ENCODE measurements at regions of chr11 and their contacts with region 1.

Region 1: GRCh38 chr11:95067039-95067840 is 521 bp downstream of the SRSF8 start:
- DNase-seq: peak; percentile 80
- ATAC-seq: peak; percentile 74
- H3K4me3 Mint-ChIP-seq: peak overlapping the region; percentile 94
- H3K27ac Mint-ChIP-seq: peak overlapping the region; percentile 97
- H3K4me1 Mint-ChIP-seq: peaks cover 25% of the 10 kb centered on the region
- H3K27me3 Mint-ChIP-seq: peaks cover 8% of the 10 kb centered on the region

Region 2: DNA sequence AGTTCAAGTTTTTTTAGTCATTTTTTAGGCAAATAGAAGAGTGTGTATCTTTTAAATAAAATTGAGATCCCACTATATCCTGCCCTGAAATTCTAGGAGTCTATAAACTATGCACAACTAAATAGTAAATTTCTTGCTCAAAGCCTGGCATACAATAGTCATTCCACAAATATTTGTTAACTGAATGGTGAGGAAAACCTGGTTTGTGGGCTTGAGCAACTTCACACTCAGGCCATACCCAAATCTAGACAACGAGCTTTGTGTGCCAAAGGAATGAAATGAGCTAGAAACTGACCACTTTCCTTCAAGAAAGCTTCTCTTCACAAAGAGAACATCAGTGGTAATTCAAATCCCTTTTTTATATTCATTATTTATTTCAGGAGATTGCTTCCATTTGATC is 338.7 kb before region 1 on chr11:
- CTCF ChIA-PET with region 1: no interaction called
- POLR2A ChIA-PET with region 1: no interaction called
- DNase-seq: no peak
- ATAC-seq: no peak
- H3K4me3 Mint-ChIP-seq: no peak overlapping the region
- H3K27ac Mint-ChIP-seq: no peak overlapping the region
- H3K4me1 Mint-ChIP-seq: no peaks in the 10 kb centered on the region
- H3K27me3 Mint-ChIP-seq: peaks cover 15% of the 10 kb centered on the region

Region 3: DNA sequence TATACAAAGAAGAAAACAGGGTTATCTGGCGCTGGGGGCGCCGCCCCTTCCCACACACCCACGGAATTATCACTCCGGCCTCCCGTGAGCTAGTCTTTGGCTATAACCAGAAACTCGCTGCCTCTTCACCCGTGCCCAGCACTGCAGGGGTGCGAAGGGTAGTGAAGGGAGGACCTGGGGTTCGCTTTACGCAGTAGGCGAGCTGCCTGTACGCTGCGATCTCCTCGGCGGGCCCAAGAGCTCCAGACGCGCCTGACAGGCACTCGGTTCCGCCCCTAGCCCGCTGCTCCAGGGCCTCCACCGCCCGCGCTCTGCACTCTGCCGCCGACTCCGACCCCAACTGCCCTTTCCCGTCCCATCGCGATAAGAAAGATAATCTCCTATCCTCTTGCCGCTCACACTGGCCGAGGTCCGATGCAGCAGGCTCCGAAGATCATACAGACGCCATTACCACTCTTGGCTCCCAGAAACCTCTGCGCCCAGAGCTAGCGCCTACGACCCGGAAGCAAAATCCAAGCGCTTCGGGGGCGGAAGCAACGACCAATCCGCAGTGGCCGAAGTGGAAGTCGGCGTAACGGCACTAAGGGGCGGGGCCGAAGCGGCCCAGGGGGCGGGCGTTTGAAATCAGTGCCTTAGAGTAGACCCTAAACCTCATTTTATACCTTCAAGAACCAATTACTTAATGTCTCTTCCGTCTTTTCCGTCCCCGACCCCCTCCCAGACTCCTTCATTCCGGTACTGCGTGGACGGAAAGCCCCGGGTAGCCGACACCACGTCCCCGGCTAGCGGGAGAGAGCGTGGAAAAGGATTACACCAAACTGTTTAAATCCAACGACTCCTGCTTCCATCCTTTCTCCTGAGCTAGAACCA is 93.9 kb before region 1 on chr11 and contains the starts of genes CWC15 and KDM4D:
- CTCF ChIA-PET with region 1: interaction called, 7 read pairs
- POLR2A ChIA-PET with region 1: interaction called, 34 read pairs
- DNase-seq: peak; percentile 97
- ATAC-seq: peak; percentile 100
- H3K4me3 Mint-ChIP-seq: peak within 1 kb of the TSS; percentile 89
- H3K27ac Mint-ChIP-seq: peak within 1 kb of the TSS; percentile 92
- H3K4me1 Mint-ChIP-seq: peaks cover 28% of the 10 kb centered on the region
- H3K27me3 Mint-ChIP-seq: no peaks in the 10 kb centered on the region
- total RNA-seq, gene CWC15: 79.0 to 79.5 TPM
- total RNA-seq, gene KDM4D: 0.89 to 0.90 TPM

Region 4: DNA sequence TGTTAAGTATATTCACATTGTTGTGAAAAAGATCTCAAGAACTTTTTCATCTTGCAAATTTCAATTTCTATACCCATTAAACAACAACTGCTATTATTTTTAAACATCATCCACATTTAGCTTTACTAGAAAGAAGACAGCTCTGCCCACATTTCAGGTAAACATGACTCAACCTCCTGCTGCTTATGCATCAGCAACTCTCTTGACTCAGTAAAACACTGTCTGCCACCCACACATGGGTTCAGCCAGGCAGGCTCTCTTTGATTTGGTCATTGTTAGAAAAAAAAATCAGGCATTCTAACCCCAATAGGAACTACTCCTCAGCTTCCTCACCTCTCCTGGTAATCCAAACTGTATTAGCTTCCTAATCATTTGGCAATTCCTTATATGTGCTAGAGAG is 17.3 kb after region 1 on chr11:
- CTCF ChIA-PET with region 1: interaction called, 233 read pairs
- POLR2A ChIA-PET with region 1: interaction called, 103 read pairs
- DNase-seq: peak; percentile 27
- ATAC-seq: no peak
- H3K4me3 Mint-ChIP-seq: no peak overlapping the region
- H3K27ac Mint-ChIP-seq: no peak overlapping the region
- H3K4me1 Mint-ChIP-seq: peaks cover 40% of the 10 kb centered on the region
- H3K27me3 Mint-ChIP-seq: no peaks in the 10 kb centered on the region

Region 5: GRCh38 chr11:95095858-95096587 is 28.8 kb after region 1 on chr11:
- CTCF ChIA-PET with region 1: interaction called, 233 read pairs
- POLR2A ChIA-PET with region 1: interaction called, 103 read pairs
- DNase-seq: peak; percentile 4
- ATAC-seq: peak; percentile 65
- H3K4me3 Mint-ChIP-seq: peak overlapping the region; percentile 21
- H3K27ac Mint-ChIP-seq: peak overlapping the region; percentile 84
- H3K4me1 Mint-ChIP-seq: peaks cover 83% of the 10 kb centered on the region
- H3K27me3 Mint-ChIP-seq: no peaks in the 10 kb centered on the region

Region 6: DNA sequence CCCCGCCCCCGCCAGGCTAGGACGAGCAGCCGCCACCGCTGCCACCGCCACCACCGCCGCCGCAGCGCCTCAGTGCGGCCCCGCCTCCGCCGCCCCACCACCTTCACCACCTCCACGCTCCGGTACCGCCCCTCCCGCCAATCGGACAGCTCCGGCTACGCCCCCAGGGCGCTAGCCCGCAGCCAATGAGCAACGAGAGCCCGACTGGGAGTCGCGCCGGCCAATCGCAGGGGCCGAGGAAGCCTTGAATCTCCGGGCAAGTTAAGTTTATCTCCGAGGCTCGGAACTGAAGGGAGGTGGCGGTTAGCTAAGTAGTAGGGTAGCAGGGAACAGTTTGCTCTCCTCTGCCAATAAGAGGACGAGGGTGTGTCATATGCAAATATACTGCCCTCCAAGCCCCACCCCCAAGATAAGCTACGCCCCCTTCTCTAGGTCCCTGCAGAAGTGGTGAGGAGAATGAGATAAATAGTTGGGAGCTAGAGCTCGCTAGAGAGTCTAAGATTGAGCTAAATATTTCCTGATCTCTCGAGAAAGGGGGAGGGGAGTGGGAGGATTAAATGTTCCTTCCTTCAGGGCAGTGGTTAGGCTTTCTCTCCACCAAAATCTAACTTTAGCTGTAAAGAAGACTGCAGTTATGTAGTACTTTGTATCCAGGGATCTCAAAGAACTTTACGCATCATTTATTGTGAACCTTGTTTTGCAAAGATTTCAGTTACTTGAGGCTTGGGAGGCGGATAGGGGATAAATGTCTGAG is 164.1 kb after region 1 on chr11 and contains the start of gene SESN3:
- CTCF ChIA-PET with region 1: interaction called, 5 read pairs
- POLR2A ChIA-PET with region 1: interaction called, 11 read pairs
- DNase-seq: peak; percentile 99
- ATAC-seq: peak; percentile 96
- H3K4me3 Mint-ChIP-seq: no peak within 1 kb of the TSS
- H3K27ac Mint-ChIP-seq: peak within 1 kb of the TSS; percentile 86
- H3K4me1 Mint-ChIP-seq: peaks cover 44% of the 10 kb centered on the region
- H3K27me3 Mint-ChIP-seq: peaks cover 2% of the 10 kb centered on the region
- total RNA-seq, gene SESN3: 29.1 to 31.5 TPM